ENCODE measurements at regions of chr9 and their contacts with region 1.

Region 1: GRCh38 chr9:71716138-71716909 is 52.0 kb downstream of the CEMIP2 start:
- DNase-seq: peak in 1 of 14 experiments; percentile 14
- ATAC-seq: no peak
- H3K4me3 ChIP-seq: no peak overlapping the region
- H3K4me3 Mint-ChIP-seq: no peak overlapping the region
- H3K27ac ChIP-seq: no peak overlapping the region
- H3K27ac Mint-ChIP-seq: no peak overlapping the region
- H3K4me1 ChIP-seq: no peaks in the 10 kb centered on the region
- H3K4me1 Mint-ChIP-seq: peaks cover 24% of the 10 kb centered on the region
- H3K27me3 ChIP-seq: no peaks in the 10 kb centered on the region
- H3K27me3 Mint-ChIP-seq: no peaks in the 10 kb centered on the region
- CTCF ChIP-seq: peak; percentile 69

Region 2: DNA sequence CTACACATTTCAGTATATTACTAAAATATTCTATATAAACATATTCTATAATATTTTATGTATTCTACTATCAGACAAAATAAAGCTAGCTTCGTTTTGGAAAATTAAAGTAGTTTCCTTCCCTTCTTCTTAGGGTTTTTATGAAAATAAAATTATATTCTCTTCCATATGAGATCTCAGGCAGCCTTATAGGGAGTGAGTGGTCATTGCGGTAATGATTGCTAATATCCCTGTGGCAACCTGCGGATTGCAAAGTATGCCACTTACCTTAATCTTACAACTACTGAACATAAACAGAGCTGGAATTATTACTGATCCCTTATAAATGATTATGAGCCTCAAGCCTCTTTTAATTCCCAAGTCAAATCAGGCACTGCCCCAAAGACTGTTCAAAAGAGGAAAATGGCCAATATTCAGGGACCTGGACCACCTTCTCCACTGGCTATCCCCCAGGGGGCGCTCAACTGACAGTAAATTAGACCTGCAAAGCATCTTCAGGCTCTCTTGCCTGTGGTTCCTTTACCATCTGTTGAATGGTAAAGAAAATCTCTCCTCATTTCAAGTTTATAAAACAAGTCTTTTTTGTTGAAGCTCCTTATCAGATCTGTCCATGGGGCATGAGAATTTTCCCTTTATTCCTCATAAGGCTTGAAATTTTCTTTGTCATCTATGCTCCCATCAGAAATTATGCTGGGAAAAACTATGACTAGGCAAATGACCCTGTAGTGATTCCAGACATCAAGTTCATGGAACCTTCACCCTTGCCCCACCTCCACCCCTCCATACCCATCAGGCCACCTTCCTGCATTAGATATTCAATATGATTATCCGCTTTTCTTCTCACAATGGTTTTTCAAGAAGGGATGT is 111.9 kb before region 1 on chr9:
- CTCF ChIA-PET with region 1: no interaction called
- POLR2A ChIA-PET with region 1: no interaction called
- intact Hi-C with region 1: loop called in 1 of 2 experiments (anchors 5 kb)
- DNase-seq: peak; percentile 60 to 91 (median 77)
- ATAC-seq: peak; percentile 75
- H3K4me3 ChIP-seq: no peak overlapping the region
- H3K4me3 Mint-ChIP-seq: no peak overlapping the region
- H3K27ac ChIP-seq: no peak overlapping the region
- H3K27ac Mint-ChIP-seq: no peak overlapping the region
- H3K4me1 ChIP-seq: no peaks in the 10 kb centered on the region
- H3K4me1 Mint-ChIP-seq: no peaks in the 10 kb centered on the region
- H3K27me3 ChIP-seq: no peaks in the 10 kb centered on the region
- H3K27me3 Mint-ChIP-seq: no peaks in the 10 kb centered on the region
- CTCF ChIP-seq: peak; percentile 94